ENCODE measurements at regions of chr1 and their contacts with region 1.

Region 1: GRCh38 chr1:161549652-161550051 is at the start of gene FCGR3A:
- DNase-seq: no peak
- ATAC-seq: no peak
- H3K4me3 ChIP-seq: no peak within 1 kb of the TSS
- H3K27ac ChIP-seq: no peak within 1 kb of the TSS
- H3K4me1 ChIP-seq: peaks cover 0 to 5% of the 10 kb centered on the region in 2 experiments; a peak in 3 of 5 replicates
- H3K27me3 ChIP-seq: no peaks in the 10 kb centered on the region
- CTCF ChIP-seq: no peak
- EP300 ChIP-seq: no peak
- POLR2A ChIP-seq: no peak
- RAD21 ChIP-seq: no peak
- polyA plus RNA-seq, gene FCGR3A: 0.04 to 0.15 TPM

Region 2: GRCh38 chr1:161506336-161507223 is 43.1 kb before region 1 on chr1:
- CTCF ChIA-PET with region 1: no interaction called
- POLR2A ChIA-PET with region 1: no interaction called
- in situ Hi-C with region 1: no loop called
- intact Hi-C with region 1: loop called (anchors 5 kb)
- DNase-seq: peak; percentile 50 to 85 (median 54)
- ATAC-seq: peak; percentile 79
- H3K4me3 ChIP-seq: peak overlapping the region; percentile 51
- H3K27ac ChIP-seq: peak overlapping the region; percentile 87
- H3K4me1 ChIP-seq: peaks cover 16 to 53% of the 10 kb centered on the region in 2 experiments
- H3K27me3 ChIP-seq: no peaks in the 10 kb centered on the region
- CTCF ChIP-seq: no peak
- EP300 ChIP-seq: 0 out of 2 replicates have a peak, but pooled peaks have one; percentile 11
- POLR2A ChIP-seq: peak; percentile 50
- RAD21 ChIP-seq: no peak

Region 3: DNA sequence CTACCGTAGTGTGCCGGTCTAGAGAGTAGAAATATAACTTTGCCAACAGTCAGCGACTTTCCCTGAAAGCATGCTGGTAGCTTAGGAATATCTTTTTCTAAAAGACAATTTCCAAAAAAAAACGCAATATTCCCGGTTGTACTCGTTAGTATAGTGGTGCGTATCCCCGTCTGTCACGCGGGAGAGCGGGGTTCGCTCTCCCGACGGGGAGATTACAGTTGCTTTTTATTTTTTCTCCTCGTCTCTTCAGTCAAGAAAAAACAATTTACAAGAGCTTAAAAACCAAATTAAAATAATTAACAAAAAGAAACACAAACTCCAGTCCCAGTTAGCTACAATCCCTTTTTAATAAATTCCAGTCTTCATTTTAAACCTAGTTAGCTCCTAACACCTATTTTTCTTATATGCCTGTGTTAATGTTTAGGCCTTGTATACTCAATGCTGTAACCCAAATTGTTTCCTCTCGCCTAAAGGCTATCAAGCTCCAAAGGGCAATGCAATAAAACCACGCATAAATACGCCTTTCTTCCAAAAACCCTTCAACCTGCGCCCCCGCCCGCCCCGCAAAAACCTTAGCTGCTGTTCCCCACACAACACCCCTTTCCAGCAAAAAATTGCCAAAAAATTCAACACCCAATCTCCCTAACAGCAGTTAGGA is 17.5 kb before region 1 on chr1:
- CTCF ChIA-PET with region 1: no interaction called
- POLR2A ChIA-PET with region 1: no interaction called
- in situ Hi-C with region 1: no loop called
- intact Hi-C with region 1: no loop called
- DNase-seq: peak; percentile 23 to 67 (median 40)
- ATAC-seq: no peak; the same call in 2 of the 3 replicates
- H3K4me3 ChIP-seq: peak overlapping the region; percentile 66
- H3K27ac ChIP-seq: peak overlapping the region; percentile 91
- H3K4me1 ChIP-seq: peaks cover 4 to 7% of the 10 kb centered on the region in 2 experiments; a peak in 3 of 5 replicates
- H3K27me3 ChIP-seq: no peaks in the 10 kb centered on the region
- CTCF ChIP-seq: no peak
- EP300 ChIP-seq: 0 out of 2 replicates have a peak, but pooled peaks have one; percentile 5
- POLR2A ChIP-seq: no peak
- RAD21 ChIP-seq: no peak

Measured in K562 (cell line).